Activated T-helper 1 cell treated with anti-CD3 and anti-CD28 coated beads, Interleukin-12 subunit alpha, Interleukin-12 subunit beta, Interleukin-2, Interleukin-4 antibody, amounts not matched to agents 30 ng/mL and 10 ng/mL and 1 ng/mL, durations not matched to agents 14 hours and 24 hours and 36 hours (primary cell): ENCODE measurements at regions of chr17 and their contacts with region 1.

Region 1: GRCh38 chr17:44400226-44400847 is 10.9 kb upstream of the ITGA2B start:
- DNase-seq: no peak
- H3K4me3 Mint-ChIP-seq: no peak overlapping the region
- H3K27ac Mint-ChIP-seq: no peak overlapping the region
- H3K4me1 Mint-ChIP-seq: peaks cover 8% of the 10 kb centered on the region
- H3K27me3 Mint-ChIP-seq: no peaks in the 10 kb centered on the region

Region 2: DNA sequence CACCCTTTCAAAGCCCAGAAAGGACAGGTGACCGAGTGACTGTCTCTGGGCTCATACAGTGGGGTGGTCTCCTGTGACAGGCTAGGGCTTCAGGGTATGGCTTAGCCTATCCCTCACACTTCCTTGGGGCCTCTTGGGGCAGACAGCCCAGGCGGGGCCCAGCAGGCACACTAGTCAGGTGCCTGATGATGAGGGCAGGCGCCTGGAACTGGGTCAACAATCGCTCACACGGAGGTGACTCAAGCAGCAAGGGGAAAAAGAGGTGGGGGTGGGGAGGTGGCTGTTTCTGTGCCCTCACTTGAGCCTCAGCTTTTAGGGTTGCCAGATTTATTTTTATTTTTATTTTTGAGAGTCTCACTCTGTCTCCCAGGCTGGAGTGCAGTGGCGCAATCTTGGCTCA is 61.6 kb before region 1 on chr17:
- intact Hi-C with region 1: no loop called
- DNase-seq: no peak
- H3K4me3 Mint-ChIP-seq: no peak overlapping the region
- H3K27ac Mint-ChIP-seq: no peak overlapping the region
- H3K4me1 Mint-ChIP-seq: no peaks in the 10 kb centered on the region
- H3K27me3 Mint-ChIP-seq: peaks cover 15% of the 10 kb centered on the region

Region 3: GRCh38 chr17:44417553-44417952 is 17.2 kb after region 1 on chr17:
- intact Hi-C with region 1: loop called (anchors 2 kb)
- DNase-seq: no peak
- H3K4me3 Mint-ChIP-seq: no peak overlapping the region
- H3K27ac Mint-ChIP-seq: peak overlapping the region; percentile 85
- H3K4me1 Mint-ChIP-seq: peaks cover 22% of the 10 kb centered on the region
- H3K27me3 Mint-ChIP-seq: no peaks in the 10 kb centered on the region

Region 4: GRCh38 chr17:44522883-44523671 is 122.7 kb after region 1 on chr17:
- intact Hi-C with region 1: loop called (anchors 1 kb)
- DNase-seq: peak; percentile 25
- H3K4me3 Mint-ChIP-seq: no peak overlapping the region
- H3K27ac Mint-ChIP-seq: no peak overlapping the region
- H3K4me1 Mint-ChIP-seq: no peaks in the 10 kb centered on the region
- H3K27me3 Mint-ChIP-seq: peaks cover 14% of the 10 kb centered on the region

Region 5: DNA sequence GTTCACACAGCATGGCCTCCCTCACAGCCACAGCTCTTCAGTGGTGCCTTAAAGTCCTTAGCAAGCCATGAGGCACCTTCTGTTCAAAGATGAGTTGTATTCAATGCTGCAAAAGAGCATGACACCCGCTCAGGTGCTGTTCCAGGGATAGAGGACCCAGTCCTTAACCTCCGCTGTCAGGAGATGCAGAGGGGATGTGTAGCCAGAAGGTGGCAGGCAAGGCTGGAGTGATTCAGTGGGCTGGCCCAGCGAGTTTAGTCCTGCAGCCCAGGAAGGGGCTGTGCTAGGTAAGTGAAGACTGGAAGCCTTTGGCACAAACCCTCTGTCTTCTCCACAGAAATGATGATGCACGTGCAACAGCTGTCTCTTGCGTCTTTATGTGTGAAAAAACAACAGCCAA is 333.4 kb after region 1 on chr17:
- intact Hi-C with region 1: no loop called
- DNase-seq: no peak
- H3K4me3 Mint-ChIP-seq: no peak overlapping the region
- H3K27ac Mint-ChIP-seq: no peak overlapping the region
- H3K4me1 Mint-ChIP-seq: peaks cover 6% of the 10 kb centered on the region
- H3K27me3 Mint-ChIP-seq: no peaks in the 10 kb centered on the region